ENCODE measurements at regions of chr15 and their contacts with region 1.

Region 1: GRCh38 chr15:45228931-45229330 is 23.1 kb upstream of the SLC28A2 start:
- DNase-seq: no peak
- H3K4me3 ChIP-seq: no peak overlapping the region
- H3K27ac ChIP-seq: no peak overlapping the region
- H3K4me1 ChIP-seq: no peaks in the 10 kb centered on the region
- H3K27me3 ChIP-seq: no peaks in the 10 kb centered on the region
- CTCF ChIP-seq: no peak
- EP300 ChIP-seq: no peak
- POLR2A ChIP-seq: no peak

Region 2: GRCh38 chr15:45265506-45265905 is 36.6 kb after region 1 on chr15:
- intact Hi-C with region 1: loop called (anchors 1 kb)
- DNase-seq: no peak
- H3K4me3 ChIP-seq: no peak overlapping the region
- H3K27ac ChIP-seq: no peak overlapping the region
- H3K4me1 ChIP-seq: no peaks in the 10 kb centered on the region
- H3K27me3 ChIP-seq: no peaks in the 10 kb centered on the region
- CTCF ChIP-seq: no peak
- EP300 ChIP-seq: no peak
- POLR2A ChIP-seq: no peak

Region 3: GRCh38 chr15:45378149-45378912 is 149.4 kb after region 1 on chr15 and contains the start of gene GATM:
- intact Hi-C with region 1: no loop called
- DNase-seq: peak; percentile 94
- H3K4me3 ChIP-seq: peak within 1 kb of the TSS; percentile 53 to 65 (median 58)
- H3K27ac ChIP-seq: peak within 1 kb of the TSS; percentile 82 to 93 (median 90)
- H3K4me1 ChIP-seq: peaks cover 0 to 55% (median 33%) of the 10 kb centered on the region in 4 donors
- H3K27me3 ChIP-seq: no peaks in the 10 kb centered on the region
- CTCF ChIP-seq: peak; percentile 9 to 59 (median 39)
- EP300 ChIP-seq: peak in 1 of 4 donors; percentile 21
- POLR2A ChIP-seq: peak; percentile 32 to 57
- total RNA-seq, gene GATM: 38.4 to 51.4 (median 42.0) TPM

Measured in sigmoid colon (tissue), 7 donors.